HAP-1 (cell line): ENCODE measurements at regions of chr7 and their contacts with region 1.

Region 1: GRCh38 chr7:35906191-35906908 is 105.5 kb downstream of the SEPTIN7 start:
- DNase-seq: peak; percentile 39 to 75
- H3K4me3 ChIP-seq: no peak overlapping the region
- H3K4me1 ChIP-seq: no peaks in the 10 kb centered on the region
- H3K27me3 ChIP-seq: no peaks in the 10 kb centered on the region

Region 2: GRCh38 chr7:35716038-35716803 is 190.1 kb before region 1 on chr7:
- in situ Hi-C with region 1: loop called (anchors 10 kb)
- DNase-seq: no peak
- H3K4me3 ChIP-seq: no peak overlapping the region
- H3K4me1 ChIP-seq: no peaks in the 10 kb centered on the region
- H3K27me3 ChIP-seq: no peaks in the 10 kb centered on the region; the same call in 1 of the 2 replicates

Region 3: DNA sequence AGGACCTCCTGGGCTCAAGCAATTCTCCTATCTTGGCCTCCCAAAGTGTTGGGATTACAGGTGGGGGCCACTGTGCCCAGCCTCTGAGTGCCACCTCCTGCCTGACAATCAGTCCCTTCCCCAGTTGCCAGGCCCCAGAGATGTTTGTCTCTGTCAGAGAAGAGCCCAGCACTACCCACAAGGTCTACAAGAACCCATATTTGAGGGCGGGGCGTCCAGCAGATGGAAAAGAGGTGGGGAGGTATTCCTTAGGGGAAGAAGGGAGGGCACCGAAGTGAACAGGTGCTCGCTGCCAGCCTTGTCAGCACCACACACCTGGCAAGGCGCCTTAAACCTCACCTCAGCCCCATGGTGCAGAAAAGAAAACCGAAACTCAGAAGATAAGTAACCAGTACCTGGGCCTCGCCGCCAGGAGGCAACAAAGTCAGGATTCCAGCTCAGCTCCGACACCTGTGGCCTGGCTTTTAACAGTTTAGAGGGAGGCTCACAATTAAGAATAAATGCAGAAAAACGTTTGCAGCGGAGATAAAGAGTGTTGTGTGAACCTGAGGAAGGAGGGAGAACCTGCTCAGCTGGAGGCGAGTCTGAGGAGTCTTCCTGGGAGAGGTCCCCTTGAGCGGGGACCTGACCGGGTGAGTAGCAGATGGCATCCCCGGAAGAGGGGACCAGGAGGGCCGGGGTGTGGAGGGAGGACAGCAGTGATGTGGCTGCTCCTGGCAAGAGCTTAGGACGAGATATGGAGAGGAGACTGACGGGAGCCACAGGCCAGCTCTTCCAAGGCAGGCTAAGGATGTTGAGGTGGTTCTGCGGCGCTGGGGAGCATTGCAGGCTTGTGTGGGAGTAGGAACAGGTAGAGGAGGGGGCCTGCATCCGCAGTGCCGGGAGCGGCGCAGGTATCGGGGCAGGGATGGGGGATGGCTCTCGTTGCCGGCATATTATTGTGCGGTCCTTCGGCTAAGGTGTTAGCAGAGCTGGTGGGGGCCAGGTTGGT is 406.3 kb after region 1 on chr7:
- in situ Hi-C with region 1: loop called (anchors 10 kb)
- DNase-seq: no peak
- H3K4me3 ChIP-seq: no peak overlapping the region
- H3K4me1 ChIP-seq: no peaks in the 10 kb centered on the region
- H3K27me3 ChIP-seq: no peaks in the 10 kb centered on the region